Activated CD8-positive, alpha-beta memory T cell treated with anti-CD3 and anti-CD28 coated beads, Interleukin-2, amount 10 ng/mL, durations not matched to agents 7 days and 5 days (primary cell): ENCODE measurements at regions of chr11 and their contacts with region 1.

Region 1: DNA sequence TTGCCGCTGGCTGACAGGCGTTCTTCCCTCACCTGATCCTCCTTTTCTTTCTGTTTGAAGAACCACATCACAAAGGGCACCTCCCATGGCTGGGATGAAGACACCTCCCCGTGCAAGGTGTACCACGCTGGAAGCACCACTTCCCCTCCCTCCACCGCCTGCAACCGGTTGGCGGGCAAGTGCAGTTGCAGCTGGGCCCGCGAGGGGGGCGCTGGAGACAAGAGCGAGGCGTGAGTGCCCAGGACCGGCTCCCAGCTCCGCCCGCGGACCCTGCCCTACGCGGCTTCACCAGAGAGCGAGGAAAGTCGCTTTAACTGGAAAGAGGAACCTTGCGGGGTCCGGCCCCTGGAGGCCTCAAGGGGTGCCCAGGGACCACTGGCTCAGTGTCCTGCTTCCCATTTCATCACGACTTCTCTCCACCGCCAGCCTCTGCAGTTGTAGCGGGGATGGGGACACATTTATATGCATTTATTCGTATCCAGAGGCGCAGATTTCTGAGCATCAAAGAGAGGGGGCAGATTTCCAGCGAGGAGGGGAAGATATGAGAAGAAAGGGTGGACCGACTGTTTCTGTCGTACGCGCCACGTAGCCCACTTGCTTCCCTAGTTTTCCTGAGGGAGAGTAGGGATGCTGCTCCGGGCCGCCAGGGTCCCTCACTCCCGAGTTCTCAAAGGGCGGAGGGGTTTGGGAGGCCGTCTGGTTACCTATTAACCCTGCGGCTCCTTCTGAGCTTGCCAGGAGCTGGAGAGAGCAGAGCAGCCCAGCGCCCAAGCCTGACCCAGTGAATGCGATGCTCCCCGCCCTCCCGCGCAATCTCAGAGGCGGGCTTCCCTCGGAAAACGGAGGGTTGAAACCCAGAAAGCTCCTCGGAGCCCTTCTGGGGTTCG is 3.5 kb downstream of the ESAM start:
- DNase-seq: peak; percentile 82
- ATAC-seq: peak; percentile 64
- H3K4me3 Mint-ChIP-seq: no peak overlapping the region
- H3K27ac Mint-ChIP-seq: no peak overlapping the region
- H3K4me1 Mint-ChIP-seq: peaks cover 19% of the 10 kb centered on the region
- H3K27me3 Mint-ChIP-seq: peaks cover 53% of the 10 kb centered on the region

Region 2: GRCh38 chr11:124778281-124778680 is 19.7 kb after region 1 on chr11:
- CTCF ChIA-PET with region 1: interaction called, 18 read pairs
- DNase-seq: no peak
- ATAC-seq: no peak
- H3K4me3 Mint-ChIP-seq: no peak overlapping the region
- H3K27ac Mint-ChIP-seq: no peak overlapping the region
- H3K4me1 Mint-ChIP-seq: peaks cover 10% of the 10 kb centered on the region
- H3K27me3 Mint-ChIP-seq: no peaks in the 10 kb centered on the region

Region 3: DNA sequence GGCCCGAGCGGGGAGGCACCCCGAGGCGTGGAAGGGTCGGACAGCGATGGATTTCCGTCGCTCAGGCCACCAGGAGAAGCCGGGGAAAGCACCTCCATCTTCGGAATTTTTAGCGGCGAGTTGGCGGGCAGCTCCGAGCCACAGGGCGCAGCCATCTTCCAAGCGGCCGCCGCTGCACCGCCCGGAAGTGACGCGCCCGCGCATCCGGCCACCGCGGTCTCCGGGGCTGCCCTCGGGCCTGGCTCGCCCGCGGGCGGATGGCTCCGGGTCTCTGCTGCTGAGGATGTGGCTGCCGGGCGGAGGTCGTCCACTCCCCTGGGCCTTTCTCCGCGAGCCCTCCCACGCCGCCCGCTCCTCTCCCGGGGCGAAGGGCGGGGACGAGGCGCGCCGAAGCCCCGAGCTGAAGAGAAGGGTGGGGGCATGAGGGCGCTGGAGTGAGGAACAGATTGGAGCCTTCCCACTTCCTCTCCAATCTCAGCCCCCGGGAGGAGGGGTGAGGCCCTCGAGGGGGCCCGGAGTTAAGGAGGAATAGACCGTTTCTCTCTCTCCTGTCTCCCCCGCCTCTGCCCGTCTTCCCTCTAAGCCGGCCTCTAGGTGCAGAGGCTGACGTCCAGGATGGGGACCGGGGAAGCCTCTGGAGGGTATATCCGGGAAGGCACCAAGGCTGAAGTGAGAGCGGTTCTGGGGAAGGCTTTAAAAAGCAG is 41.8 kb after region 1 on chr11 and contains the start of gene MSANTD2:
- CTCF ChIA-PET with region 1: interaction called, 216 read pairs
- DNase-seq: peak; percentile 86
- ATAC-seq: peak; percentile 91
- H3K4me3 Mint-ChIP-seq: peak within 1 kb of the TSS; percentile 82
- H3K27ac Mint-ChIP-seq: peak within 1 kb of the TSS; percentile 90
- H3K4me1 Mint-ChIP-seq: peaks cover 25% of the 10 kb centered on the region
- H3K27me3 Mint-ChIP-seq: peaks cover 2% of the 10 kb centered on the region
- total RNA-seq, gene MSANTD2: 8.5 to 10.2 TPM

Region 4: GRCh38 chr11:124807201-124807600 is 48.6 kb after region 1 on chr11:
- CTCF ChIA-PET with region 1: interaction called, 216 read pairs
- DNase-seq: no peak
- ATAC-seq: no peak
- H3K4me3 Mint-ChIP-seq: no peak overlapping the region
- H3K27ac Mint-ChIP-seq: no peak overlapping the region
- H3K4me1 Mint-ChIP-seq: no peaks in the 10 kb centered on the region
- H3K27me3 Mint-ChIP-seq: peaks cover 25% of the 10 kb centered on the region